Esophagus muscularis mucosa (tissue), 4 donors: ENCODE measurements at regions of chr6 and their contacts with region 1.

Region 1: GRCh38 chr6:19857139-19857538 is 20.0 kb downstream of the ID4 start:
- DNase-seq: no peak
- H3K4me3 ChIP-seq: no peak overlapping the region
- H3K27ac ChIP-seq: no peak overlapping the region
- H3K4me1 ChIP-seq: peaks cover 0 to 5% (median 0%) of the 10 kb centered on the region in 4 donors
- H3K27me3 ChIP-seq: no peaks in the 10 kb centered on the region
- CTCF ChIP-seq: no peak
- EP300 ChIP-seq: no peak
- POLR2A ChIP-seq: no peak

Region 2: GRCh38 chr6:19024737-19025136 is 832.4 kb before region 1 on chr6:
- intact Hi-C with region 1: loop called (anchors 5 kb)
- DNase-seq: no peak
- H3K4me3 ChIP-seq: no peak overlapping the region
- H3K27ac ChIP-seq: no peak overlapping the region
- H3K4me1 ChIP-seq: peaks cover 0 to 7% (median 6%) of the 10 kb centered on the region in 4 donors
- H3K27me3 ChIP-seq: no peaks in the 10 kb centered on the region
- CTCF ChIP-seq: peak; percentile 57 to 71 (median 60)
- EP300 ChIP-seq: no peak
- POLR2A ChIP-seq: no peak